ENCODE measurements at regions of chr2 and their contacts with region 1.

Region 1: GRCh38 chr2:105235388-105236054 is 6.0 kb upstream of the GPR45 start:
- DNase-seq: peak in 33 of 35 experiments; percentile 4 to 71 (median 39)
- ATAC-seq: peak; percentile 22 to 63 (median 54)
- H3K4me3 ChIP-seq: no peak overlapping the region
- H3K4me3 Mint-ChIP-seq: no peak overlapping the region
- H3K27ac ChIP-seq: no peak overlapping the region
- H3K27ac Mint-ChIP-seq: no peak overlapping the region
- H3K4me1 ChIP-seq: peaks cover 0 to 8% of the 10 kb centered on the region in 2 experiments
- H3K4me1 Mint-ChIP-seq: peaks cover 5 to 25% (median 21%) of the 10 kb centered on the region in 3 donors
- H3K27me3 ChIP-seq: peaks cover 0 to 16% of the 10 kb centered on the region in 2 experiments
- H3K27me3 Mint-ChIP-seq: peaks cover 0 to 4% of the 10 kb centered on the region in 2 donors

Region 2: GRCh38 chr2:105068387-105068786 is 167.1 kb before region 1 on chr2:
- CTCF ChIA-PET with region 1: interaction called in 1 of 2 experiments, 11 read pairs
- POLR2A ChIA-PET with region 1: no interaction called
- DNase-seq: no peak
- ATAC-seq: no peak
- H3K4me3 ChIP-seq: no peak overlapping the region
- H3K4me3 Mint-ChIP-seq: no peak overlapping the region
- H3K27ac ChIP-seq: no peak overlapping the region
- H3K27ac Mint-ChIP-seq: no peak overlapping the region
- H3K4me1 ChIP-seq: peaks cover 4 to 12% of the 10 kb centered on the region in 2 experiments
- H3K4me1 Mint-ChIP-seq: peaks cover 16 to 43% (median 36%) of the 10 kb centered on the region in 3 donors
- H3K27me3 ChIP-seq: no peaks in the 10 kb centered on the region
- H3K27me3 Mint-ChIP-seq: no peaks in the 10 kb centered on the region

Region 3: GRCh38 chr2:105114551-105114950 is 121.0 kb before region 1 on chr2:
- CTCF ChIA-PET with region 1: interaction called, 35 to 46 read pairs
- POLR2A ChIA-PET with region 1: no interaction called
- DNase-seq: peak in 2 of 35 experiments; percentile 2 to 57
- ATAC-seq: peak in 1 of 4 experiments; percentile 48
- H3K4me3 ChIP-seq: no peak overlapping the region
- H3K4me3 Mint-ChIP-seq: no peak overlapping the region
- H3K27ac ChIP-seq: no peak overlapping the region
- H3K27ac Mint-ChIP-seq: no peak overlapping the region
- H3K4me1 ChIP-seq: no peaks in the 10 kb centered on the region
- H3K4me1 Mint-ChIP-seq: no peaks in the 10 kb centered on the region
- H3K27me3 ChIP-seq: no peaks in the 10 kb centered on the region
- H3K27me3 Mint-ChIP-seq: no peaks in the 10 kb centered on the region

Region 4: GRCh38 chr2:105179469-105180372 is 55.8 kb before region 1 on chr2:
- CTCF ChIA-PET with region 1: interaction called in 1 of 2 experiments, 10 read pairs
- POLR2A ChIA-PET with region 1: no interaction called
- DNase-seq: no peak
- ATAC-seq: no peak
- H3K4me3 ChIP-seq: no peak overlapping the region
- H3K4me3 Mint-ChIP-seq: no peak overlapping the region
- H3K27ac ChIP-seq: no peak overlapping the region
- H3K27ac Mint-ChIP-seq: no peak overlapping the region
- H3K4me1 ChIP-seq: peaks cover 0 to 21% of the 10 kb centered on the region in 2 experiments
- H3K4me1 Mint-ChIP-seq: peaks cover 0 to 9% (median 0%) of the 10 kb centered on the region in 3 donors
- H3K27me3 ChIP-seq: peaks cover 0 to 24% of the 10 kb centered on the region in 2 experiments
- H3K27me3 Mint-ChIP-seq: peaks cover 16 to 26% of the 10 kb centered on the region in 2 donors

Region 5: GRCh38 chr2:105262651-105263091 is 27.1 kb after region 1 on chr2:
- CTCF ChIA-PET with region 1: no interaction called
- POLR2A ChIA-PET with region 1: no interaction called
- DNase-seq: no peak
- ATAC-seq: no peak
- H3K4me3 ChIP-seq: no peak overlapping the region
- H3K4me3 Mint-ChIP-seq: no peak overlapping the region
- H3K27ac ChIP-seq: no peak overlapping the region
- H3K27ac Mint-ChIP-seq: no peak overlapping the region
- H3K4me1 ChIP-seq: no peaks in the 10 kb centered on the region
- H3K4me1 Mint-ChIP-seq: no peaks in the 10 kb centered on the region
- H3K27me3 ChIP-seq: no peaks in the 10 kb centered on the region
- H3K27me3 Mint-ChIP-seq: no peaks in the 10 kb centered on the region